Activated CD4-positive, alpha-beta memory T cell treated with anti-CD3 and anti-CD28 coated beads, Interleukin-2, amount 10 ng/mL, durations not matched to agents 7 days and 5 days (primary cell): ENCODE measurements at regions of chr3 and their contacts with region 1.

Region 1: GRCh38 chr3:31754575-31755278 is 222.0 kb downstream of the STT3B start:
- DNase-seq: peak; percentile 25
- H3K4me3 Mint-ChIP-seq: no peak overlapping the region
- H3K27ac Mint-ChIP-seq: peak overlapping the region; percentile 96
- H3K4me1 Mint-ChIP-seq: peaks cover 59% of the 10 kb centered on the region
- H3K27me3 Mint-ChIP-seq: no peaks in the 10 kb centered on the region

Region 2: GRCh38 chr3:31766669-31767068 is 11.9 kb after region 1 on chr3:
- CTCF ChIA-PET with region 1: interaction called, 6 read pairs
- POLR2A ChIA-PET with region 1: interaction called, 16 read pairs
- DNase-seq: no peak
- H3K4me3 Mint-ChIP-seq: no peak overlapping the region
- H3K27ac Mint-ChIP-seq: no peak overlapping the region
- H3K4me1 Mint-ChIP-seq: peaks cover 58% of the 10 kb centered on the region
- H3K27me3 Mint-ChIP-seq: no peaks in the 10 kb centered on the region

Region 3: DNA sequence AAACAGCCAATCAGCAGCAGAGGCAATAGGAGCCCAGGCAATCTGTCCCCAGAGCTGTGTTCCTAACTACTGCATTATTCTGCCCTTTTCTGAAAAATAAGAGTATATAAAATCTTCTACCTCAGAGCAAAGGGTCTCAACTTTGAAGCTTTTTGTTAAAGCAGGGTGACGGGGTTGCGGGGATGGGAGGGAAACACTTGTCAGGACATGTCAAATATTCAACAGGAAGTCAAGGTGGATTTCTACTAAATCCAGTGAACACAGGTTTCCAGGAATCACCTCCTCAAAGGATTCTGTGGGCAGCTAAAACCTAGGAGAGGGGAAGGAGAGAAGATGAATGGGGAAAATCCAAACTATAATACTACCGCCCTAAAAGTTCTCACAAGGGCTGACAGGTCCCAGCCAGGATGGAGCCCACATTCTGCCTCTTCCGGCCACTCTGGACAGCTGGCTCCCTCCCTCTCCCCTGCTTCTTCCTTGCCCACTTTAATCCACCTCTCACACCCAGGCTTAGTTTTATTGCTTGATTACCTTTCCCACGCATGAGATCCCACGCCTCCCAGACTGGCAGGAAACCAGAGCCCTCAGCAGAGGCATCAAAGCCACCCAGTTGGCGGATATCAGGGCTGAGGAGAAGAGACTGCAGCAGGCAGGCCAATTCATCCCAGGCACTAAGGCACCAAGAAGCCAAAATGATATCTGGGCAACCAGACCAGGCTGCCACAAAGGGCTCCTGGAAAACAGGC is 149.1 kb after region 1 on chr3:
- CTCF ChIA-PET with region 1: no interaction called
- POLR2A ChIA-PET with region 1: no interaction called
- DNase-seq: no peak
- H3K4me3 Mint-ChIP-seq: no peak overlapping the region
- H3K27ac Mint-ChIP-seq: no peak overlapping the region
- H3K4me1 Mint-ChIP-seq: peaks cover 34% of the 10 kb centered on the region
- H3K27me3 Mint-ChIP-seq: no peaks in the 10 kb centered on the region